ENCODE measurements at regions of chr11 and their contacts with region 1.

Region 1: GRCh38 chr11:100681064-100681502 is 6.0 kb upstream of the ARHGAP42 start:
- DNase-seq: no peak
- H3K4me3 ChIP-seq: no peak overlapping the region
- H3K27ac ChIP-seq: no peak overlapping the region
- H3K4me1 ChIP-seq: no peaks in the 10 kb centered on the region
- H3K27me3 ChIP-seq: no peaks in the 10 kb centered on the region
- CTCF ChIP-seq: no peak
- POLR2A ChIP-seq: no peak

Region 2: DNA sequence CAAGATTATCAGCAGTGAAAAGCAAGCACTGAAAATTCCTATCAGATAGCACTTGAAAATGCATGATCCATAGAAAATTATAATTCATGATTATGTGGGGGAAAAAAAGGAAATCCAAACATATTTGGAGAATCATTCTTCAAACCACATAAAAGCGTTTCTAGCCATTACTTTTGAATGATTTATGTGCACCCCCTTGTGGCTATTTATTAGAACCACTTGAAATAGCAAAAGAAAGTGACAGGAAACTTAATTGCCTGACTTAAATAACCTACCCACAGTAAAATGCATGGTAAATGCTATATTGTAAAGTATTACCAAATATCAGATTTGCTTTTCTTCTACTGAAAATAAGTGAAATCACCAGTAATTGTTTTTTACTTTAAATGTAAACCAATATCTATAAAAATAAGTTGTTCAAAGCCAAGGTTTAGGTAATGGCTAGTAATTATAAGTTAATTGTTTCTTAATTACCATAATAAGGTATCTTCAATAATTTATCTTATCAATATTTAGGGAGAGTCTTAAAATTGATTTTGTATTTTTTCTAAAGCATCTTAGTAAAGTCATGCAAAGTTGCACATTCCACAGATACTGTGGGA is 174.5 kb after region 1 on chr11:
- CTCF ChIA-PET with region 1: interaction called, 12 read pairs
- POLR2A ChIA-PET with region 1: no interaction called
- dilution Hi-C with region 1: no loop called
- intact Hi-C with region 1: loop called (anchors 1 kb)
- DNase-seq: peak; percentile 61
- H3K4me3 ChIP-seq: no peak overlapping the region
- H3K27ac ChIP-seq: no peak overlapping the region
- H3K4me1 ChIP-seq: no peaks in the 10 kb centered on the region
- H3K27me3 ChIP-seq: no peaks in the 10 kb centered on the region
- CTCF ChIP-seq: peak; percentile 36 to 41
- POLR2A ChIP-seq: no peak

Measured in endothelial cell of umbilical vein (primary cell).